Endothelial cell of umbilical vein (primary cell): ENCODE measurements at regions of chr4 and their contacts with region 1.

Region 1: GRCh38 chr4:128454281-128455075 is 166.9 kb upstream of the PGRMC2 start:
- DNase-seq: peak; percentile 92
- H3K4me3 ChIP-seq: no peak overlapping the region
- H3K27ac ChIP-seq: peak overlapping the region; percentile 55
- H3K4me1 ChIP-seq: peaks cover 17% of the 10 kb centered on the region
- H3K27me3 ChIP-seq: no peaks in the 10 kb centered on the region
- CTCF ChIP-seq: peak; percentile 79 to 90
- POLR2A ChIP-seq: no peak

Region 2: DNA sequence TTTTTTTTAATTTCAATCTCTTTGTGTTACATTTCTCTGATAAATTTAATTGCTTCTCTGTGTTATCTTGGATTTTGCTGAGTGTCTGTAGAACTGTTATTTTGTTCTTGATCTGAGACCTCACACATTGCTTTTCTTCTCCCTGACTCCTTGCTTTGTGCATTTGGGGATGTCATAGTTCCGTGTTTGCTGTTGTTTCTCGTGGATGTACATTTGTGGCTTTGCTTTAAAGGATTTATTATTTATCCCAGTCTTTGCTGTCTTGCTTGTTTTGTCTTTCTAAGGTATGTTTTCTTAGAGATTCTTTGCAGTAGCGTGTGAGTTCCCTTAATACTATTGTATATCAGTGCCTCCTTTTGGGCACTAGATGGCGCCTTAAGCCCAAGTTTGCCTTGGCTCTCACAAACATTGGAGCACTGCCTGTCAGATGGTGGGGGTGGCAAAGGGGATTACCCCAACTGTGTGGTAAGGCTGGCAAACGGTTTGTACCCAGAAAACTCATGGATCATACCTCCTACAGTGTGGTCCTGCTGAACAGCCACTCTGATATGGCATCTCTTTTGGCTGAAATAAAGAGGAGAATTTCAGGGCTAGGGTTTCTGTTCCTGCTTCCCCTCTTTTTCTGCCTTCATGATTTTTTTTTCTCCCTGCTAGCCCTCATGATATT is 263.2 kb before region 1 on chr4:
- CTCF ChIA-PET with region 1: interaction called, 10 read pairs
- POLR2A ChIA-PET with region 1: no interaction called
- dilution Hi-C with region 1: no loop called
- intact Hi-C with region 1: loop called (anchors 1 kb)
- DNase-seq: peak; percentile 76
- H3K4me3 ChIP-seq: no peak overlapping the region
- H3K27ac ChIP-seq: no peak overlapping the region
- H3K4me1 ChIP-seq: no peaks in the 10 kb centered on the region
- H3K27me3 ChIP-seq: no peaks in the 10 kb centered on the region
- CTCF ChIP-seq: peak; percentile 71 to 75
- POLR2A ChIP-seq: no peak

Region 3: DNA sequence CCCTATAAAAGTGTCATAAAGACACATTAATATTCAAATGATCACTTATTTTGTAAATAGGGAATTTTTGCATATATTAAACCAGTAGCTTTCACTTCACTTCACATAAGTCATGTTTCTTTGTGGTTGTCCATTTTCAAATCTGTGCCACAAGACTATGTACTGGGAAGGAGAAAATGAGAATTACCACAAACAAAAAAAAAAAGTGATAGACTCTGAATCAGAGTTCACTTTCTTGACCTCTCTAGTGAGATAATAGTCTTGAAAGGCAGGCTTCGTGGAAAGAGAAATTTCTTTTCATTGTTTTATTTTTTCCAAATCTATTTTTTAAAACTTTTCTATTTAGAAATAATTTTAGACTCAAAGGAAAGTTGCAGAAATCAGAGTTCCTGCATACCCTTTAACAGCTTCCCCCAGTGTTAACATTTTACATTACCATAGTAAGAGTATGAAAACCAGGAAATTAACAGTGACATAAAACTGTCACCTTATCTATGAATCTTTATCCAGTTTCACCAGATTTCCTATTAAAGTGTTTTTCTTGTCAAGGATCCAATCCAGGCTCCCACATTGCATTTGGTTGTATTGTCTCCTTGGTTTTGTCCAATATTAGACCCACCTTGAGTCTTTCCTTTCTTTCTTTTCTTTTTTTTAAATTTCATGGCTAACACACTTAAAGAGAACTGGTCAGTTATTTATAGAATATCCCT is 48.5 kb after region 1 on chr4:
- CTCF ChIA-PET with region 1: interaction called, 27 read pairs
- POLR2A ChIA-PET with region 1: no interaction called
- dilution Hi-C with region 1: no loop called
- intact Hi-C with region 1: loop called (anchors 1 kb)
- DNase-seq: peak; percentile 91
- H3K4me3 ChIP-seq: no peak overlapping the region
- H3K27ac ChIP-seq: peak overlapping the region; percentile 62
- H3K4me1 ChIP-seq: peaks cover 22% of the 10 kb centered on the region
- H3K27me3 ChIP-seq: no peaks in the 10 kb centered on the region
- CTCF ChIP-seq: no peak
- POLR2A ChIP-seq: peak; percentile 69

Region 4: DNA sequence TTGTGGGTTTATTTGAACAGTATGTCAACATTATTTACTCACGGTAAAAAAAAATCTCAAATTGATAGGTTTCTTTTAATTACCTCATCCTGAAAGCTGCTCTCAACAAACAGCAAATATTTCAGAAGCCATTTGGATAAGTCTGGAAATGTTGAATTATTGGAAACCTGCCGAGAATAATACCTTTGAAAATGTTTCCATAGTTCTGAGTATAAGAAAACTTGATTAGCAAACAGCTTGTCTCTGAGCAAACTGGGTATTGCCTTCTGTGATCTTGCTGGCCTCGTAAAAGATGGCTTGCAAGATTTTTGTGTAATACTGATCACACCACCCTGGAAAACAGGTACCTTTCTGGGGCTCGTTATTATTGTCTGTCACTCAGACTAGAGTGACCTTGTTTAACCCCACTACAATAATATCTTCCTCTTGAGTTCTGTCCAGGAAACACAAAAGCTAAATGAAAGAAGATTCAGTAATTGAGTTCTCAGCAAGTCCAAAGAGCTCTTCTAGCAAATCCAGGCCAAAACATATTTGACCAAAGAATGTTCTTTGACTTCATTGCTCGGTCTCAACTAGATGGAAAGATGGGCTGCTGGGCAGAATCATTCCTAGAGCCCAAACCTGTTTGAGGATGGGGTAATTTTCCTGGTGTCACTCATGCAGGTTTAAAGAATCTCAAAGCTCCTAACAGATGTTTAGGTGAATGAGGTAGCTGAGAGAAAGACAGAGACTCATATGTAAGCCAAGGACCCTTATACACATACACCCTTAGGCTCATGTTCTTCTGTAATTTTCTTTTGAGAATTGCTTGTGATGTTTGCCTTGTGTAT is 99.4 kb after region 1 on chr4:
- CTCF ChIA-PET with region 1: interaction called, 60 read pairs
- POLR2A ChIA-PET with region 1: interaction called, 9 read pairs
- dilution Hi-C with region 1: no loop called
- intact Hi-C with region 1: loop called (anchors 1 kb)
- DNase-seq: peak; percentile 68
- H3K4me3 ChIP-seq: peak overlapping the region in 2 of 3 experiments; percentile 21 to 60
- H3K27ac ChIP-seq: peak overlapping the region; percentile 86
- H3K4me1 ChIP-seq: peaks cover 22% of the 10 kb centered on the region
- H3K27me3 ChIP-seq: no peaks in the 10 kb centered on the region
- CTCF ChIP-seq: no peak
- POLR2A ChIP-seq: no peak

Region 5: DNA sequence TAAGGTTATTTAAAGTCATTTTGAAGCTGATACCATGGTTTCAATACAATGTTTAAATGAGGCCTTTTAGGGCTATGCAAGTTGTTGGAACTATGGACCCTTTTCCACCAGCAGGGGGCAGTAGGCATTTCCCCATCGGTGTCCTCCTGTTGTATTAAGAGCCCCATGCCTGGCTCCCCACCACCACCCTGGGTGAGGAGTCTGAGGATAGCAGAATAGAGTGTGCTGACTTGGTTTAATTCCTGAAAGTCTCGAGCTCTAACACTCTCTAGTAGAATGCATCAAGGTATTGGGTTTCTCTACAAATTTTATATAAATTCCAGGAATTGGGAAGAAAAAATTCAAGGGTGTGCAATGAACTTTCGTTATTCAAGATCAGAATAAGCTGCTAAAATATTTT is 120.2 kb after region 1 on chr4:
- CTCF ChIA-PET with region 1: interaction called, 47 read pairs
- POLR2A ChIA-PET with region 1: no interaction called
- dilution Hi-C with region 1: no loop called
- intact Hi-C with region 1: loop called (anchors 1 kb)
- DNase-seq: peak; percentile 49
- H3K4me3 ChIP-seq: no peak overlapping the region
- H3K27ac ChIP-seq: no peak overlapping the region
- H3K4me1 ChIP-seq: peaks cover 38% of the 10 kb centered on the region
- H3K27me3 ChIP-seq: no peaks in the 10 kb centered on the region
- CTCF ChIP-seq: peak; percentile 44 to 59
- POLR2A ChIP-seq: no peak

Region 6: GRCh38 chr4:128831531-128832242 is 377.2 kb after region 1 on chr4:
- CTCF ChIA-PET with region 1: interaction called, 10 read pairs
- POLR2A ChIA-PET with region 1: no interaction called
- dilution Hi-C with region 1: no loop called
- intact Hi-C with region 1: no loop called
- DNase-seq: no peak
- H3K4me3 ChIP-seq: no peak overlapping the region
- H3K27ac ChIP-seq: no peak overlapping the region
- H3K4me1 ChIP-seq: peaks cover 14% of the 10 kb centered on the region
- H3K27me3 ChIP-seq: no peaks in the 10 kb centered on the region
- CTCF ChIP-seq: no peak
- POLR2A ChIP-seq: no peak

Region 7: GRCh38 chr4:129093191-129093920 is 638.9 kb after region 1 on chr4 and contains the start of gene SCLT1:
- CTCF ChIA-PET with region 1: interaction called, 3 read pairs
- POLR2A ChIA-PET with region 1: no interaction called
- dilution Hi-C with region 1: no loop called
- intact Hi-C with region 1: loop called (anchors 5 kb)
- DNase-seq: peak; percentile 99
- H3K4me3 ChIP-seq: peak within 1 kb of the TSS; percentile 86 to 97 (median 88)
- H3K27ac ChIP-seq: peak within 1 kb of the TSS; percentile 89
- H3K4me1 ChIP-seq: peaks cover 26% of the 10 kb centered on the region
- H3K27me3 ChIP-seq: no peaks in the 10 kb centered on the region
- CTCF ChIP-seq: no peak
- POLR2A ChIP-seq: peak; percentile 64
- total RNA-seq, gene SCLT1: 14.0 and 16.3 TPM in 2 replicates